ENCODE measurements at regions of chr10 and their contacts with region 1.

Region 1: GRCh38 chr10:123994417-123995081 is 98.8 kb downstream of the CHST15 start:
- DNase-seq: peak; percentile 97
- ATAC-seq: peak; percentile 68
- H3K4me3 Mint-ChIP-seq: peak overlapping the region; percentile 70
- H3K27ac Mint-ChIP-seq: no peak overlapping the region
- H3K4me1 Mint-ChIP-seq: peaks cover 20% of the 10 kb centered on the region
- H3K27me3 Mint-ChIP-seq: peaks cover 47% of the 10 kb centered on the region
- CTCF ChIP-seq: peak; percentile 100

Region 2: GRCh38 chr10:124019886-124020797 is 25.6 kb after region 1 on chr10:
- CTCF ChIA-PET with region 1: interaction called, 31 read pairs
- POLR2A ChIA-PET with region 1: no interaction called
- DNase-seq: peak; percentile 50
- ATAC-seq: peak; percentile 74
- H3K4me3 Mint-ChIP-seq: peak overlapping the region; percentile 38
- H3K27ac Mint-ChIP-seq: peak overlapping the region; percentile 96
- H3K4me1 Mint-ChIP-seq: peaks cover 77% of the 10 kb centered on the region
- H3K27me3 Mint-ChIP-seq: peaks cover 2% of the 10 kb centered on the region; the same call in 1 of the 2 replicates
- CTCF ChIP-seq: no peak

Region 3: DNA sequence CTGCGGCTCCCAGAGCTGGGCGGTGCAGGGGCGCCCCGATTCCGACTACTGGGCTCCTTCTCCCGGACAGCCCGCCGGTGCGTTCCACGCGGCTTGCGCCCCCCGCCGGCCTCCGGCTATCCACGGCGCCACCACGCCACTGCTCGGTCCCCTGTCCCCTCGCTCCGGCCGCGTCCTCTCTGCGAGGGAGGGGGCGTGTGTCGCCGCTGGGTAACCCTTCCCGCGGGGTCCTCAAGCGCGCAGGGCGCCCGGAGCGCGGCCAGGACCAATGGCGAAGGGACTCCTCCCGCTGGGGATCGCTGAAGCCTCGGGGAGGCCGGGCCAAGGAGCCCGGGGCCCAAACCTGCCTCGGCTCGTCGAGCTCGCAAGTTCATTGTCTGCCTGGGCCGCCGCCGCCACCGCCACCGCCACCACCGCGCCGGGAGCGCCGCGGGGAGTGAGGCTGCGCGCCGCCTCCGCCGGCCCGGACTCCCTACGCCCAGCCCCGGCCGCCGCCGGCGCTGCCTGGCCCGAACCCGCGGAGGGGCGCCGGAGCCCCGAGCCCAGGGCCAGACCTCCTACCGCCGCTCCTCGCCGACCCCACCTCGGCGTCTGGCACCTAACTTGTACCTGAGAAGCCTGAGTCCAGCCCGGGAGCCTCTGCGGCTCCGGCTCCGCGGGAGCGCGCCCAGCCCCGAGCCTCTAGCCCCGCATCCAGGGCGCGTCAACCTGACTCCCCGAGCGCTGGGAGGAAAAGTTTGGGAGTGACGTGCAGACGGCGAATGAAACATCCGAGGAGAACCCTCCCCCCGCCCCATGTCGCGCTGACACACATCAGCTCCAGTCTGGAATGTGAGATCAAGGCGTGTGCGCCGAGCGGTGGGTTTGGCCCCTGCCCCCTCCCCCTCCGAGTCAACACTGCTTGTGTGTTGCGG is 98.6 kb after region 1 on chr10 and contains the start of gene CHST15:
- CTCF ChIA-PET with region 1: interaction called, 64 read pairs
- POLR2A ChIA-PET with region 1: no interaction called
- DNase-seq: peak; percentile 71
- ATAC-seq: peak; percentile 15
- H3K4me3 Mint-ChIP-seq: peak within 1 kb of the TSS; percentile 65
- H3K27ac Mint-ChIP-seq: no peak within 1 kb of the TSS
- H3K4me1 Mint-ChIP-seq: peaks cover 31% of the 10 kb centered on the region
- H3K27me3 Mint-ChIP-seq: peaks cover 61% of the 10 kb centered on the region
- CTCF ChIP-seq: no peak
- total RNA-seq, gene CHST15: 7.9 to 10.7 TPM (median 9.1 TPM) in 3 replicates

Region 4: DNA sequence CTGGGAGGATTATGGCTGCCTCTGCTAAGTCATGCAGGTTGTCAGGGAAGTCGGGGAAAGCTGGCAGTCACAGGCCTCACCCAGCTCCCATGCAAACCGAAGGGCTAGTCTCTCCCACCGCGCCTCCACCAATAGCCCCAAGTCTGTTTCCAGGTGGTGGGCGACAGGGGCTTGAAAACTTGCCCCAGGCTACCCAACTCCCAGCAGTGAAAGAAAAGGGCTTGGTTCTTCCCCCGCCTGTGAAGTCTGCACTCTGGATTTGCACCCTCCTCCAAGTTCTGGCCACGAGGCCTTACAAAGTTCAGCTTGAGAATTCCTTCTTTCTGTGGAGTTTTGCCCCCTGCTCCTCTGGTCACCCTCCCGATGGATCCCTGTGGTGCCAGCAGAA is 198.8 kb after region 1 on chr10:
- CTCF ChIA-PET with region 1: interaction called, 24 read pairs
- POLR2A ChIA-PET with region 1: no interaction called
- DNase-seq: no peak
- ATAC-seq: no peak
- H3K4me3 Mint-ChIP-seq: no peak overlapping the region
- H3K27ac Mint-ChIP-seq: no peak overlapping the region
- H3K4me1 Mint-ChIP-seq: peaks cover 7% of the 10 kb centered on the region
- H3K27me3 Mint-ChIP-seq: peaks cover 5% of the 10 kb centered on the region
- CTCF ChIP-seq: no peak

Region 5: GRCh38 chr10:124279882-124280281 is 285.3 kb after region 1 on chr10:
- CTCF ChIA-PET with region 1: interaction called, 13 read pairs
- POLR2A ChIA-PET with region 1: no interaction called
- DNase-seq: no peak
- ATAC-seq: no peak
- H3K4me3 Mint-ChIP-seq: no peak overlapping the region
- H3K27ac Mint-ChIP-seq: no peak overlapping the region
- H3K4me1 Mint-ChIP-seq: no peaks in the 10 kb centered on the region
- H3K27me3 Mint-ChIP-seq: peaks cover 2% of the 10 kb centered on the region; the same call in 1 of the 2 replicates
- CTCF ChIP-seq: no peak

Region 6: GRCh38 chr10:124388823-124389612 is 394.5 kb after region 1 on chr10:
- CTCF ChIA-PET with region 1: interaction called, 128 read pairs
- POLR2A ChIA-PET with region 1: no interaction called
- DNase-seq: peak; percentile 93
- ATAC-seq: peak; percentile 82
- H3K4me3 Mint-ChIP-seq: peak overlapping the region; percentile 53
- H3K27ac Mint-ChIP-seq: no peak overlapping the region
- H3K4me1 Mint-ChIP-seq: peaks cover 17% of the 10 kb centered on the region
- H3K27me3 Mint-ChIP-seq: peaks cover 10% of the 10 kb centered on the region
- CTCF ChIP-seq: peak; percentile 92